OCI-LY7 (cell line): ENCODE measurements at regions of chr3 and their contacts with region 1.

Region 1: GRCh38 chr3:48240711-48241491 is at the start of gene ZNF589:
- DNase-seq: peak; percentile 97
- H3K4me3 ChIP-seq: peak within 1 kb of the TSS; percentile 88
- H3K27ac ChIP-seq: peak within 1 kb of the TSS; percentile 80
- H3K4me1 ChIP-seq: peaks cover 36% of the 10 kb centered on the region
- CTCF ChIP-seq: peak; percentile 66
- total RNA-seq, gene ZNF589: 61.4 and 62.4 TPM in 2 replicates

Region 2: GRCh38 chr3:48188266-48189201 is 52.4 kb before region 1 on chr3 and contains the start of gene CDC25A:
- CTCF ChIA-PET with region 1: no interaction called
- POLR2A ChIA-PET with region 1: interaction called, 8 read pairs
- intact Hi-C with region 1: loop called (anchors 1 kb)
- DNase-seq: peak; percentile 100
- H3K4me3 ChIP-seq: peak within 1 kb of the TSS; percentile 95
- H3K27ac ChIP-seq: peak within 1 kb of the TSS; percentile 87
- H3K4me1 ChIP-seq: peaks cover 34% of the 10 kb centered on the region
- CTCF ChIP-seq: no peak
- total RNA-seq, gene CDC25A: 74.5 and 83.4 TPM in 2 replicates

Region 3: DNA sequence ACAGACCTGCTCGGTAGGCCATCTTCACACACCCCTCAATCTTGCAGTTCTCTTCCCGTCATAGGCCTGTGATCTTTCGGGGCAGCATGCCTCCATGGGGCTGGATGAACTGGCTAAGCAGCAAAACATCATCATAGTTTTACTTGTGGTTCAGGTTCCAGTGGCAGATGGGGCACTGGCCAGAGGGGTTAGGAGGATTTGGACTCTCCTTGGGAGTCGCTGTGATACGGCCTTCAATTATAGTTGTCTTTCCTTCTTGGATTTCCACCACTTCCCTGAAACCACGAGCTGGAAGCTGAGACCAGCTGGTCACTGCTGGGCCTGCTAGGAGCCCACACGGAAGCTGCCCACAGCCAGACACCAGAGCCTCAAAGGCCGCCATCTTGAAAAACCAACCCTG is 15.7 kb after region 1 on chr3:
- CTCF ChIA-PET with region 1: no interaction called
- POLR2A ChIA-PET with region 1: interaction called, 15 read pairs
- intact Hi-C with region 1: no loop called
- DNase-seq: no peak
- H3K4me3 ChIP-seq: no peak overlapping the region
- H3K27ac ChIP-seq: no peak overlapping the region
- H3K4me1 ChIP-seq: no peaks in the 10 kb centered on the region
- CTCF ChIP-seq: no peak